HepG2 (cell line): ENCODE measurements at regions of chr14 and their contacts with region 1.

Region 1: DNA sequence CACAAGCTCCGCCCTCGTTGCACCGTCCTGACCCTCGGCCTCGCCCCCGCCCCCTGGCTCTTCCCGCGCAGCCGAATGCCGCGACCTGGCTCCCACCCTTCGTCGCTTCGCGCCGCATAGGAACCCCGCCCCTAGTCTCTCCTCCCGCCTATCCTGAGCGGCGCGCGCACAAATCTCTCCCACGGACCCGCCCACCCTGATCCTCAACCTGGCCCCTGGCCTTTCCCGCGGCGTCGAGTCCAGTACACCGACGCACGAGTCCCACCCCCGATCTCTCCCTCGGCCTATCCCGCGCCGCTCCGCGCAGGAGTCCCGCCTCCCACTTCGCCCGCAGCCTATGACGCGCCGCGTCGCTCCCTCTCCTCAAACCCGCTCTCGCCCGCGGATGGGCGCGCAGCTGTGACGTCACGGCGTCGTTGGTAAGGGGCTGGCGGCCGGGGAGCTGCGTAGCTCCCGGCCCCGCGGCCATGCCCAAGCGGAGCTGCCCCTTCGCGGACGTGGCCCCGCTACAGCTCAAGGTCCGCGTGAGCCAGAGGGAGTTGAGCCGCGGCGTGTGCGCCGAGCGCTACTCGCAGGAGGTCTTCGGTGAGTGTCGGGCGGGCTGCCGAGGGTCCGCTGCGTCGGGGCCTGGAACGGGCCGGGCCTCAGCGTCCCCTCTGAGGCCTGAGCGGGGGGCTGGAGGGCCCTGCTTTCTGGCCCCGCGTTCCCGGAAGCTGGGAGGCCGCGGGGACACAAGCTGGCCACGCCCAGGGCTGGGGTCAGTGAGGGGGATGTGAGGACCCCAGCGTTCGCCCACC is at the start of gene SIVA1:
- DNase-seq: peak; percentile 97
- ATAC-seq: peak; percentile 81
- H3K4me3 ChIP-seq: peak within 1 kb of the TSS; percentile 78 to 94 (median 80)
- H3K27ac ChIP-seq: peak within 1 kb of the TSS; percentile 88
- H3K4me1 ChIP-seq: peaks cover 69% of the 10 kb centered on the region
- H3K27me3 ChIP-seq: no peaks in the 10 kb centered on the region
- CTCF ChIP-seq: no peak; the same call in 1 of the 2 replicates
- EP300 ChIP-seq: no peak; a peak in 1 of 4 replicates
- POLR2A ChIP-seq: peak; percentile 83 to 86
- RAD21 ChIP-seq: peak; percentile 58
- total RNA-seq, gene SIVA1: 153 and 186 TPM in 2 replicates

Region 2: DNA sequence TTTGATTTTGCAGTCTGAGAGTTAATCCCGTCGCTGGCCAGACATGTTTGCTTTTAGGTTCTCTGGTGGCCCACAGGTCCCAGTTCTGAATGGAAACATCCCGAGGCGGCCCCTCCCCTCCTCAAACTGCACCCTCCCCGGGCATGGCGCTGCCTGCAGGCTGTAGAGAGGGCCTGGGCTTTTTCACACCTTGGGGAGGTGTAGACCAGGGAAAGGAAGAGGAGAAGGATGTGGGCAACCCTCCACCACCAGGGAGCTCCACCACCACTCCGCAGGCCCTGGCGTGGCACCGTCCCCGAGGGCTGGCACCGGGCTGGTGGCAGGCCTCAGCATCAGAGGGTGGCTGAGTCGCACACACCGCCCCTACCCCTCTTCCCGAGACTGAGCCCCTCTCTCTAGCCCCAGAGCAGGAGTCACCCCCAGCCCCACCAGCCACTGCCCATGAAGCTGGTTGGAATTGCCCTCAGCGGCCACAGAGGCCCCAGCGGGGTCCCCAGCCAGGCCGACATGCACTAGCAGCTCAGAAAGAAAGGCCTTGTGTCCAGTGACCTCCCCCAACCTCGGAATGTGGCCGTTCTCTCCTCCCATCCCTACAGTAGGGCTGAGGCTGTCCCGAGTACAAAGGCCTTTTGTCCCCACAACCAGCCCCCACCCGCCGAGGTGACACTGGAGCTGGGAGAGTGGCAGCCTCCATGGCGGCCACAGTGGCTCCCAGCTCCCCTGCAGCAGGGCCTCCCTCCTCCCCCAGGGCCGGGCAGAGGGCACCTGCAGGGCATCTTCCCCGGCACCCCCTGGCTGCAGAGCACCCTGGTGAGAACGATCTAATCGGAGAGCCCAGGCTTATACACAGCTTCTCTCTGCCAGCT is 87.0 kb before region 1 on chr14:
- CTCF ChIA-PET with region 1: no interaction called
- POLR2A ChIA-PET with region 1: interaction called, 17 read pairs
- in situ Hi-C with region 1: no loop called
- intact Hi-C with region 1: no loop called
- DNase-seq: peak; percentile 96
- ATAC-seq: peak; percentile 90
- H3K4me3 ChIP-seq: peak overlapping the region; percentile 29 to 69 (median 53); a peak in 5 of 6 replicates
- H3K27ac ChIP-seq: peak overlapping the region; percentile 97
- H3K4me1 ChIP-seq: peaks cover 48% of the 10 kb centered on the region
- H3K27me3 ChIP-seq: peaks cover 0 to 1% of the 10 kb centered on the region in 2 experiments; a peak in 1 of 5 replicates
- CTCF ChIP-seq: peak; percentile 65
- EP300 ChIP-seq: peak; percentile 74 to 87; a peak in 3 of 4 replicates
- POLR2A ChIP-seq: peak; percentile 77 to 88
- RAD21 ChIP-seq: no peak; the same call in none of the 2 replicates

Region 3: GRCh38 chr14:104677512-104678332 is 75.2 kb before region 1 on chr14:
- CTCF ChIA-PET with region 1: no interaction called
- POLR2A ChIA-PET with region 1: interaction called, 10 read pairs
- in situ Hi-C with region 1: no loop called
- intact Hi-C with region 1: no loop called
- DNase-seq: no peak
- ATAC-seq: peak; percentile 5
- H3K4me3 ChIP-seq: peak overlapping the region; percentile 41 to 68 (median 52); a peak in 5 of 6 replicates
- H3K27ac ChIP-seq: no peak overlapping the region
- H3K4me1 ChIP-seq: peaks cover 71% of the 10 kb centered on the region
- H3K27me3 ChIP-seq: no peaks in the 10 kb centered on the region; a peak in 1 of 5 replicates
- CTCF ChIP-seq: no peak
- EP300 ChIP-seq: no peak
- POLR2A ChIP-seq: no peak
- RAD21 ChIP-seq: no peak

Region 4: DNA sequence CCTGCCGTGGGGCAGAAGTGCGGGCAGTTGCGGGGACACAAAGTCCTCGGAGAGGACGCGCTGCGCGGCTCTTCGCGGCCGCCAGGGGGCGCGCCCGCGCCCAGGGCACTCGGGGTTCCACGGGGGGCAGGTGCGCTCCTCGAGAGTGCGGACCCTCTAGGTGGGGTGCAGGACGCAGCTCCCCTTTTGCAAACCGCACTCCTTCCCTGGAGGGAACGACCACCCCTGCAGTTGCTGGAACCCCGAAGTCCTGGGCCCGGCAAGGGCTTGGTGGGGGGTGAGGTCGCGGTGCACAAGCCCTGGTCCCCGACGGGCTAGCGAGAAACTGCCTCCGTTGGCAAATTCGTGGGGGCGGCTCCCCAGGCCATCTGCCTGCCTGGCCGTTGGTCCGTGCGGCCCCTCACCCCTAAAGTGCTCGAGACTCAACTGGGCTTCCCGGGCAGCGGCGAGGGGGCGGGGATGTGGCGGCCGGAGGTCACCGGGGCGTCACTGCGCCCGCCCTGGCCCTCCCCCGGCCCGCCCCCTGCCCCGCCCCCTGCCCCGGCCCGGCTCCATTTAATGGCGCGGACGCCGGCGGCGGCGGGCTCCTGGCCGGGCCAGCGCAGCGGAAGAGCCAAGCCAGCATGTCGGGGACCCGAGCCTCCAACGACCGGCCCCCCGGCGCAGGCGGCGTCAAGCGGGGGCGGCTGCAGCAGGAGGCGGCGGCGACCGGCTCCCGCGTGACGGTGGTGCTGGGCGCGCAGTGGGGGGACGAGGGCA is 29.1 kb before region 1 on chr14 and contains the start of gene ADSS1:
- CTCF ChIA-PET with region 1: no interaction called
- POLR2A ChIA-PET with region 1: interaction called, 18 read pairs
- in situ Hi-C with region 1: no loop called
- intact Hi-C with region 1: loop called (anchors 1 kb)
- DNase-seq: peak; percentile 24
- ATAC-seq: peak; percentile 40
- H3K4me3 ChIP-seq: peak within 1 kb of the TSS; percentile 63 to 90 (median 68)
- H3K27ac ChIP-seq: peak within 1 kb of the TSS; percentile 49
- H3K4me1 ChIP-seq: peaks cover 67% of the 10 kb centered on the region
- H3K27me3 ChIP-seq: peaks cover 0 to 3% of the 10 kb centered on the region in 2 experiments; a peak in 1 of 5 replicates
- CTCF ChIP-seq: peak; percentile 90
- EP300 ChIP-seq: no peak
- POLR2A ChIP-seq: peak in 1 of 2 experiments; percentile 27; a peak in 1 of 4 replicates
- RAD21 ChIP-seq: peak; percentile 70
- total RNA-seq, gene ADSS1: 0.98 and 1.0 TPM in 2 replicates

Region 5: GRCh38 chr14:104735830-104736642 is 16.9 kb before region 1 on chr14:
- CTCF ChIA-PET with region 1: no interaction called
- POLR2A ChIA-PET with region 1: interaction called, 68 read pairs
- in situ Hi-C with region 1: no loop called
- intact Hi-C with region 1: loop called (anchors 1 kb)
- DNase-seq: peak; percentile 81
- ATAC-seq: peak; percentile 61
- H3K4me3 ChIP-seq: peak overlapping the region in 1 of 3 experiments; percentile 15; a peak in 2 of 6 replicates
- H3K27ac ChIP-seq: peak overlapping the region; percentile 79
- H3K4me1 ChIP-seq: peaks cover 72% of the 10 kb centered on the region
- H3K27me3 ChIP-seq: no peaks in the 10 kb centered on the region
- CTCF ChIP-seq: 0 out of 2 replicates have a peak, but pooled peaks have one; percentile 30
- EP300 ChIP-seq: peak in 1 of 2 experiments; percentile 78; a peak in 1 of 4 replicates
- POLR2A ChIP-seq: peak in 1 of 2 experiments; percentile 38; a peak in 1 of 4 replicates
- RAD21 ChIP-seq: 0 out of 2 replicates have a peak, but pooled peaks have one; percentile 19